H1 (cell line): ENCODE measurements at regions of chr1 and their contacts with region 1.

Region 1: GRCh38 chr1:84689514-84690396 is 506 bp downstream of the SSX2IP start:
- DNase-seq: peak in 1 of 2 experiments; percentile 65
- H3K4me3 ChIP-seq: peak overlapping the region; percentile 54 to 89 (median 64)
- H3K27ac ChIP-seq: peak overlapping the region; percentile 81
- H3K4me1 ChIP-seq: peaks cover 2 to 7% (median 3%) of the 10 kb centered on the region in 4 experiments; a peak in 4 of 7 replicates
- H3K27me3 ChIP-seq: no peaks in the 10 kb centered on the region
- CTCF ChIP-seq: peak in 2 of 3 experiments; percentile 28 to 35; a peak in 3 of 4 replicates
- EP300 ChIP-seq: no peak
- POLR2A ChIP-seq: no peak; a peak in 1 of 3 replicates
- RAD21 ChIP-seq: peak in 1 of 2 experiments; percentile 17; a peak in 2 of 4 replicates

Region 2: DNA sequence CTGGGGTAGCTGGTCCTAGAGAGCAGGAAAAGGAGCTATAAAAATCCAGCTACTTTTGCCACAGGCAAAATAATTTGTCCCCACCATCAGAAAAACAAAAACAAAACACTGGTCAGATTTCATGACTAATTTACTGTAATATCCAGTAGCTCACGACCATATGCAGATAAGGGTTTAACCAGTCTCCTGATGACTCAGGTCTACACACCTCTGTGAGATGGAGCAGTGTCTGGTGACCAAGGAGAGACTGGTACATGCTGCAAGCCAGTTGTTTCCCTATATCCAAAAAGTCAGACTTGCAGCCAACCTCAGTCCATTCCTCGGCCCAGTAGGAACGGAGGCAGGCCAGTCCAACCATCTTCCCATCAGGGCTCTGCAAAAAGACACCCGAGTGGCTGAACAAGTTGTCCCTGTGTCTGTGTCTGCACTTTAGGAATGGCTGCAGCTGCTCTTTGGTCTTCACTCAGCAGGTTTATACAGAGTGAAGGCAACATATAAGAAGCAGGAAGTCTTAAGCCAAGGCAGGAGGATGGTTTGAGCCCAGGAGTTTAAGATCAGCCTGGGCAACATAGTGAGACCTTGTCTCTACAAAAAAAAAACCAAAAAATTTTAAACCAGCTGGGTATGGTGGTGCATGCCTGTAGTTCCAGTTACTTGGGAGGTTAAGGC is 262.1 kb before region 1 on chr1:
- CTCF ChIA-PET with region 1: no interaction called
- POLR2A ChIA-PET with region 1: no interaction called
- DNase-seq: no peak
- H3K4me3 ChIP-seq: no peak overlapping the region
- H3K27ac ChIP-seq: no peak overlapping the region
- H3K4me1 ChIP-seq: no peaks in the 10 kb centered on the region
- H3K27me3 ChIP-seq: no peaks in the 10 kb centered on the region
- CTCF ChIP-seq: no peak
- EP300 ChIP-seq: no peak
- POLR2A ChIP-seq: no peak
- RAD21 ChIP-seq: no peak

Region 3: DNA sequence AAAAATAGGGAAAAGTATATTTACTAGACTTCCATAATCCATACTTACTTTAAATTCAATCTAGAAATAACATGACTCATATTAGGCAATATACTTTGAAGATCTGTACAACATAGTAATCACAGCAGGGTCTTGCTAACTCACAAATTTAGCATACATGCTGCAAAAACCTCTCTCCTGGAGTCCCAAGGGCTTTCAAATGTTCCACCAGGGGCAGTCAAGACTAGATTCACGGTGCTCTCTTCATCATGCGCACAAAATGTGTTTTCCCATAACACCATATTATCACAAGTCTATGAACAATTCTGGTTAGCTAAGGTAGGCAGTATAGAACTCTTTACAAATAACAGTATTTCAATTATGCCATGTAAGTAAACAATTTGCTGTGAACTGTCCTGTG is 45.3 kb before region 1 on chr1:
- CTCF ChIA-PET with region 1: no interaction called
- POLR2A ChIA-PET with region 1: no interaction called
- DNase-seq: no peak
- H3K4me3 ChIP-seq: no peak overlapping the region
- H3K27ac ChIP-seq: no peak overlapping the region
- H3K4me1 ChIP-seq: no peaks in the 10 kb centered on the region
- H3K27me3 ChIP-seq: no peaks in the 10 kb centered on the region
- CTCF ChIP-seq: peak in 1 of 3 experiments; percentile 16; a peak in 1 of 4 replicates
- EP300 ChIP-seq: no peak
- POLR2A ChIP-seq: no peak
- RAD21 ChIP-seq: peak in 1 of 2 experiments; percentile 16; a peak in 2 of 4 replicates

Region 4: GRCh38 chr1:84675105-84675504 is 14.7 kb before region 1 on chr1:
- CTCF ChIA-PET with region 1: interaction called, 10 read pairs
- POLR2A ChIA-PET with region 1: interaction called, 33 read pairs
- DNase-seq: no peak
- H3K4me3 ChIP-seq: peak overlapping the region in 1 of 4 experiments; percentile 21; a peak in 2 of 8 replicates
- H3K27ac ChIP-seq: no peak overlapping the region
- H3K4me1 ChIP-seq: peaks cover 0 to 18% (median 8%) of the 10 kb centered on the region in 4 experiments; a peak in 4 of 7 replicates
- H3K27me3 ChIP-seq: no peaks in the 10 kb centered on the region
- CTCF ChIP-seq: no peak
- EP300 ChIP-seq: no peak
- POLR2A ChIP-seq: no peak
- RAD21 ChIP-seq: no peak

Region 5: GRCh38 chr1:84789014-84789413 is 99.3 kb after region 1 on chr1:
- CTCF ChIA-PET with region 1: no interaction called
- POLR2A ChIA-PET with region 1: no interaction called
- DNase-seq: no peak
- H3K4me3 ChIP-seq: no peak overlapping the region
- H3K27ac ChIP-seq: no peak overlapping the region
- H3K4me1 ChIP-seq: peaks cover 0 to 4% (median 1%) of the 10 kb centered on the region in 4 experiments; a peak in 1 of 7 replicates
- H3K27me3 ChIP-seq: no peaks in the 10 kb centered on the region
- CTCF ChIP-seq: no peak
- EP300 ChIP-seq: no peak
- POLR2A ChIP-seq: no peak
- RAD21 ChIP-seq: no peak